K562 (cell line): ENCODE measurements at regions of chr2 and their contacts with region 1.

Region 1: DNA sequence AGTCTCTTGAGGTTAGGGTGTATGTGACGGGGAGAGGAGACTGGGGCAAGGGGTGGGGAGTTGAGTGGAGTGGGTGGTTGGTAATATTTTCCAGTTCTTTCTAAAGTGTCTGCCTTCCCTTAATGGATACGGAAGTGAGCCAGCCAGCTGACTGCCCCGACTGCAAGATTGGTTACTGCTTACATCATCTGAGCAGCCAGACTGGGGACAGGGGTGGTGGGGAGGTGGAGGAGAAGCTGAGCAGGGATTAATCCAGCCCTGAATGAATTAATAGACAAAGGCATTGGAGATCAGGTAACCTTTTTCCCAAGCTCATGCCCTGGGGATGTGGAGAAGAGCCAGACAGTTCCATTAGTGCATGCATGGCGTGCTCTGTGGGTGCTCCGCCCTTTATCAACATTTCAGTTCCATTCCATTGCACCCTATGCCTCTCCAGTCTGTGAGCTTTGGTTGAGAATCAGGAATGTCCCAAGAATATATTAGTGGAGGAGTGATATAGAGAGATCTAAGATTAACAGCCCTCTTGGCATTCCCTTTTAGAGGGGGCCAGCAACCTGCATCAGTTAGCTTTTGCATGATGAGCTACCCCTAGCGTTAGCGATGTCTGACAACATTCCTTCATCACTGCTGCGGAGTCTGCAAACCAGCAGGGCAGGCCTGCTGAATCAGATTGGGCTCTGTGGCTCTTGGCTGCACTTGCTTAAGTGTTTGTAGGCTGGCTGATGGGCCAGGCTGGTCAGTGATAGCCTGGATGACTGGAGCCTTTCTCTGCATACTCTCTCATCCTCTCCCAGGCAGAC is 67.4 kb downstream of the TNP1 start:
- DNase-seq: peak in 1 of 4 experiments; percentile 42
- ATAC-seq: peak; percentile 90
- H3K4me3 ChIP-seq: no peak overlapping the region
- H3K27ac ChIP-seq: no peak overlapping the region; the same call in 2 of the 3 replicates
- H3K4me1 ChIP-seq: peaks cover 0 to 24% of the 10 kb centered on the region in 2 experiments; a peak in 4 of 5 replicates
- H3K27me3 ChIP-seq: no peaks in the 10 kb centered on the region
- CTCF ChIP-seq: peak in 2 of 3 experiments; percentile 8 to 29; a peak in 2 of 6 replicates
- EP300 ChIP-seq: peak; percentile 41; the same call in 1 of the 2 replicates
- POLR2A ChIP-seq: no peak
- RAD21 ChIP-seq: peak in 1 of 2 experiments; percentile 22; a peak in 2 of 4 replicates

Region 2: GRCh38 chr2:216880509-216881184 is 88.2 kb after region 1 on chr2:
- CTCF ChIA-PET with region 1: no interaction called
- POLR2A ChIA-PET with region 1: interaction called, 3 read pairs
- in situ Hi-C with region 1: no loop called
- intact Hi-C with region 1: loop called (anchors 2 kb)
- DNase-seq: peak; percentile 53 to 93 (median 72)
- ATAC-seq: peak; percentile 92
- H3K4me3 ChIP-seq: no peak overlapping the region
- H3K27ac ChIP-seq: peak overlapping the region; percentile 78
- H3K4me1 ChIP-seq: peaks cover 41 to 49% of the 10 kb centered on the region in 2 experiments
- H3K27me3 ChIP-seq: no peaks in the 10 kb centered on the region
- CTCF ChIP-seq: no peak
- EP300 ChIP-seq: peak; percentile 88
- POLR2A ChIP-seq: peak; percentile 54
- RAD21 ChIP-seq: no peak